Prostate gland (tissue), 2 donors: ENCODE measurements at regions of chr3 and their contacts with region 1.

Region 1: DNA sequence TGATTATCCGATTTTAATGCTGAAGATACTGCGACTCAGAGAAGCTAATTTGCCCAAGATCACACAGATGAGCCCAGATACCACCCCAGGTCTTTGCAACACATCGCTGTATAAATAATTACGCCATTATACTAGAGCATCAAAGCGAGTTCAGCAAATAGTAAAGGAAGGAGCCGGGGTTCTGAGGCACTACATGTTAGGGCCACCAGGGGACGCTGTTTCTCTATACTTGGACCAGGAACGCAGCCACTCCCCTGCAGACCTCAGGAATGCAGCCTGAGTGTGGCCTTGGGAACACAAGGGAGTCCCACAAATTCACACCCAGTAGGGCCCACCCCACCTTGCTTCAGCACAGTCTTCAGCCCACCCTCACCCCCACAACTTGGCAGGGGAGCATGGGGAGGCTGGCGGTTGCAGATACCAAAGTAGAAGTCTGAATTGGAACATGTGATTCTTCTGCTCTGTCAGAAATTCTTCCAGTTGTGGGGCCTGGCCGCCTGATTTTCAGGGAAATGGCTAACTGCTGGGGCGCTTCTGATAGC is 57.8 kb upstream of the RYK start:
- DNase-seq: peak; percentile 84
- H3K4me3 ChIP-seq: no peak overlapping the region
- H3K27ac ChIP-seq: peak overlapping the region; percentile 51 to 65
- H3K4me1 ChIP-seq: no peaks in the 10 kb centered on the region
- H3K27me3 ChIP-seq: no peaks in the 10 kb centered on the region
- CTCF ChIP-seq: peak; percentile 98 to 99 (median 99)
- POLR2A ChIP-seq: no peak

Region 2: DNA sequence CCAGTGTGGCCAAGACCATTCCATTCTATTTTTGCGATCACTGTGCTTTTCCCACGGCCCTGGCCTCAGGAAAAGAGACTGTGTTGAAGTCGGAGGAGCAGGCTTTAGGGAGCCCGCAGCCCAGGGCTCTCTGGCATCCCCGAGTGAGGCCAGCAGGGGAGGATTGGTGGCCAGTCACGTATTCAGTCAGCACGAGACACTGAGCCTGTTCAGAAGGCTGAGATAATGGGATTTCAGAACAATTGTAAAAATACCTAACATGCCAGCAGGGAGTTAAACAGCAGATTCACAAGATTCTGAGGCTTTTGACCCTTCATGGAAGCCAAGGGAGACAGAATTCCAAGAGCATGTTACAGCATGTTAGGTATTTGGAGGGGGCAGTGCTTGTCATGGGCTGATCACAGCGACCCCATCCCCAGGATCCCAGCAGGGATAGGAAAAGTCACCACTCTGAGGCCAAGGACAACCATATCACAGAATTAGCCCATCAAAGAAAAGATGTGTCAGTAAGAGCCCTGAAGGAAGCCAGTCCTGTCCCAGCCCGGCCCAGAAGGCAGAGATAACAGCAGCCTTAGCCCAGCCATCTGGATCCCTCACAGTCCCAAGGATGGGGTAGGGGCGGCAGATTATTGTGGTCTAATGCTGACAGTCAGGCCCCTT is 25.2 kb after region 1 on chr3:
- intact Hi-C with region 1: loop called (anchors 2 kb)
- DNase-seq: no peak
- H3K4me3 ChIP-seq: no peak overlapping the region
- H3K27ac ChIP-seq: peak overlapping the region; percentile 64 to 68
- H3K4me1 ChIP-seq: no peaks in the 10 kb centered on the region
- H3K27me3 ChIP-seq: no peaks in the 10 kb centered on the region
- CTCF ChIP-seq: no peak
- POLR2A ChIP-seq: no peak

Region 3: DNA sequence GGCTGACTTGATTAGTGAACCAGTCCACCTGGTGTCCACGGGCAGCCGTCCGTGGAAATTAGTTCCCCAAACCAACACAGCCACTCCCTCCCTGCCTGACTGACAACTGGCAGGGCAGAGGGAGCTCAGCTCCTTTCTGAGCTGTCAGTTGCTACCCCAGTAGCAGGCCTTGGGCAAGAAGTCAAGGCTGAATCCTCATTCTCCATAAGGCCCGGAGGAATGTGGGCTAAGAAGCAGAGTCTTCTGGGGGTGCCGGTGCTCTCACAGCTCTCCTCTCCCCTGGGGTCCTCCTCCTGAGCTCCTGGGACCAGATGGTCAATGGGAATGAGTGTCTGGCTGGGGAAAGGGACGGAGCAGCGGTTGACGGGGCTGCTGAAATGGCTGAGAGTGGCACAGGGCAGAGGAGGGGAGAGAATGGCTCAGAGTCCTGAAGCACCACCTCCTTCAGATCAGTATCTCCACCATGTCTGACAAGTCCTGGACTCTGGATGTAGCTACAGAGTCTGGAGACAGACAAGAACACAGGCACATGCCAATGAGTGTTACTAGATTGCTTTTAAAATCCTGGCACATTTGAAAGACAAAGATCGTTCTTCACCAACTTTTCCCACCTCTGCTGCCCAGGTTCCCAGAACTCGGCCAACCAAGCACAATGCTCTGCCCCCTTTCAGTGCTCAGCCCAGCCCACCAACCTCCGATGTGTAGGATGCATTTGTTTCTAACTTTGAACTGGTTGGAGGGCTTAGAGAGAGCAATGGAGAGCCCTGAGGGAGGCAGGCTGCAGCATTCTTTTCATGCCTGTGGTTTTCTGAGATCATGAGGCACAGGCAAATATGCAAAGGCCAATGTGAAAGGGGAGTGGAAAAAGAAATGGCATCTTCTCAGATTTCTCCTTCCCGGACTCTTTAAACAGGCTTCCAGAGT is 49.1 kb after region 1 on chr3:
- intact Hi-C with region 1: loop called (anchors 2 kb)
- DNase-seq: peak; percentile 53
- H3K4me3 ChIP-seq: no peak overlapping the region
- H3K27ac ChIP-seq: peak overlapping the region; percentile 70 to 74
- H3K4me1 ChIP-seq: peaks cover 16% of the 10 kb centered on the region
- H3K27me3 ChIP-seq: no peaks in the 10 kb centered on the region
- CTCF ChIP-seq: no peak
- POLR2A ChIP-seq: no peak

Region 4: GRCh38 chr3:134373994-134374790 is 65.8 kb after region 1 on chr3 and contains the start of gene AMOTL2:
- intact Hi-C with region 1: loop called (anchors 2 kb)
- DNase-seq: peak; percentile 89
- H3K4me3 ChIP-seq: peak within 1 kb of the TSS; percentile 69 to 73
- H3K27ac ChIP-seq: peak within 1 kb of the TSS; percentile 97 to 99
- H3K4me1 ChIP-seq: peaks cover 21% of the 10 kb centered on the region
- H3K27me3 ChIP-seq: no peaks in the 10 kb centered on the region
- CTCF ChIP-seq: no peak
- POLR2A ChIP-seq: peak; percentile 78
- total RNA-seq, gene AMOTL2: 86.1 to 92.8 TPM

Region 5: DNA sequence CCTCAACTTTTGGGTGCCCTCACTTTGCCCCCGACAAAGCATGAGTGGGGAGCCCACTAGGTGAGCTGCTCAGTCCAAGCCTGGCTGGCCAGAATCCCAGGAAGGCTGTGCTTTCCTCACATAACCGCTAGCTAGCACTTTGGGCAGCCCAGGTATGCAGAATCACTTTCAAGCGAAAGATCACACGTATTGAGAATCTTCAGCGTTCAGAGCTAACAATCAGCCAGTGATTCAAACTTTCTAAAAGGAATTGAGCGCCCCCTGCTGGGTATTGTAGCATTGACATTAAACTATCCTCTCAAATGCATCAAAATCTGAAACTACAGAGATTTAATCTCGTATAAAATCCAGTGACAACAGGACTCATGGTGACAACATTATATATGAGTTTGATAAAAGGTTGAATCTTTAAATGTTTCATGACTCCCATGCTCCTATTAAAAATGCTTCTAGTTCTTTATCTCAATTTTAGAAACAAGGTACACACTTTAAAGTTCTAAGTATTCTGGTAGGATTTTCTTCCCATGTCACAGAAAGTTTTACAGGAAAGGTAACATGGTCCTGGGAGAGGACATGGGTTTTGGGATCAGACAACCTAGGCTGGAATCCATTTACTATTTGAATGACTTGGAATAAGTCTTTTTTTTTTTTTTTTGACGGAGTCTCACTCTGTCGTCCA is 165.6 kb after region 1 on chr3:
- intact Hi-C with region 1: loop called (anchors 2 kb)
- DNase-seq: peak; percentile 86
- H3K4me3 ChIP-seq: no peak overlapping the region
- H3K27ac ChIP-seq: no peak overlapping the region
- H3K4me1 ChIP-seq: no peaks in the 10 kb centered on the region
- H3K27me3 ChIP-seq: no peaks in the 10 kb centered on the region
- CTCF ChIP-seq: peak; percentile 46 to 93 (median 90)
- POLR2A ChIP-seq: no peak

Region 6: DNA sequence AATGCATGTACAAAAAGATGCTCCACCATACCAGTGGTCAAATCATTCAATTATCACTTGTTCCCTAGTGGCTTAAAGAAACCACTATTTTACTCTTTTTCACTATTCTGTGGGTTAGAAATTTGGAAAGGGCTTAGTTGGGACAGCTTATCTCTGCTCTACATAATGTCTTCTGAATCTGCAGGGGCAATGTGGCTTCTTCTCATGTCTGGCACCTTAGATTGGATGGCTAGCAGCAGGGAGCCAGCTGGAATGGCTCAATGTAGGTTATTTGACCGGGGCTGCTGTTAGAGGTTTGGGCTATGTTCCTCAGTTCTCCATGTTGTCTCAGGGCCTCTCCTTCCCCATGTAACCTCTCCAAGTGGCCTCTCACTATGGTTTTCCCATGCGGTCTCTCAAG is 429.1 kb after region 1 on chr3:
- intact Hi-C with region 1: no loop called
- DNase-seq: no peak
- H3K4me3 ChIP-seq: no peak overlapping the region
- H3K27ac ChIP-seq: no peak overlapping the region
- H3K4me1 ChIP-seq: no peaks in the 10 kb centered on the region
- H3K27me3 ChIP-seq: no peaks in the 10 kb centered on the region
- CTCF ChIP-seq: no peak
- POLR2A ChIP-seq: no peak